ENCODE measurements at regions of chr22 and their contacts with region 1.

Region 1: DNA sequence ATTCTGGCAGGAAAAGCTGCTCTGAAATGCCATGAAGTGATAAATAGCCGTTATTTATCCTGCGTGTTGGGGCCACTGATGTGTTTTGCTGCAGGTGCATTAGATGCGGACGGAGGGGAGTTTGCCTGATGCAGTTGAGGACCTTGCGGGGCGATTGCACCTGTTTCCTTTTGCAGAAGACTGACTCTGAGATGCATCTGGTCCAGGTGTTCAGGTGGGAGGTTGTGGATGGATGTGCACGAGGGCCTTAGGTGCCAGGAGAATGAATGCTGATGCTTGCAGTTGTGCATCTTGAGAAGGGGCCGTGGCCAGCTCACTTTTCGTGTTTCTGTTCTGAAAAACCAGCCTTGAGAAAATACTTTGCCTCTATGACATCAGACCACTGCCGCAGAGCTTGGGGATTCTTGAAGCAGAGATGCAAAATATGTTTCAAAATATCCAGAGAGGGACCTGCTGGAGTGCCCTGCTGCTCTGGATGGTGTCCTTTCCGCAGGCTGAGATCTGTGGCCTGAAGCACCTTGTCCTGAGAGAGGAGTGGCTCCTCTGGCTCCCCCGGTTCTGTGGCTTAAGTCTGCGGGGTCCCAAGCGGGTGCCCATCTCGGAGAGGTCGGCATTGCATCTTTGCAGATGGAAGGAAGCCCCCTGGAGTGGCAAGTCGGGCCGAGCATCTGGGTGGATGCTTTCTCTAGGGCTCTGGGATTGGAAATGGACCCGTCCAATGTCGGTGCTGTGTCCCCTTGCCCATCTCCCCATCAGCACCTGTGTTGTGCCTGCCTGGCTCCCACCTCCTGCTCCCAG is 1031.1 kb downstream of the TBC1D22A start:
- DNase-seq: no peak
- H3K4me3 ChIP-seq: no peak overlapping the region
- H3K27ac ChIP-seq: no peak overlapping the region
- H3K4me1 ChIP-seq: peaks cover 0 to 3% (median 0%) of the 10 kb centered on the region in 3 donors
- H3K27me3 ChIP-seq: peaks cover 0 to under 1% (median 0%) of the 10 kb centered on the region in 4 donors
- CTCF ChIP-seq: no peak
- POLR2A ChIP-seq: no peak

Region 2: GRCh38 chr22:47826016-47826415 is 32.5 kb after region 1 on chr22:
- intact Hi-C with region 1: loop called (anchors 2 kb)
- DNase-seq: no peak
- H3K4me3 ChIP-seq: no peak overlapping the region
- H3K27ac ChIP-seq: no peak overlapping the region
- H3K4me1 ChIP-seq: no peaks in the 10 kb centered on the region
- H3K27me3 ChIP-seq: peaks cover 0 to 2% (median 0%) of the 10 kb centered on the region in 4 donors
- CTCF ChIP-seq: no peak
- POLR2A ChIP-seq: no peak

Measured in esophagus squamous epithelium (tissue), 5 donors.